Common myeloid progenitor, CD34-positive (primary cell): ENCODE measurements at regions of chr2 and their contacts with region 1.

Region 1: GRCh38 chr2:169584005-169584877 is at the start of gene PPIG:
- DNase-seq: peak; percentile 96 to 98 (median 97)
- H3K4me3 ChIP-seq: peak within 1 kb of the TSS; percentile 81 to 99 (median 95)
- H3K27ac ChIP-seq: peak within 1 kb of the TSS; percentile 95 to 98
- H3K4me1 ChIP-seq: peaks cover 9 to 19% (median 17%) of the 10 kb centered on the region in 4 experiments
- H3K27me3 ChIP-seq: no peaks in the 10 kb centered on the region

Region 2: DNA sequence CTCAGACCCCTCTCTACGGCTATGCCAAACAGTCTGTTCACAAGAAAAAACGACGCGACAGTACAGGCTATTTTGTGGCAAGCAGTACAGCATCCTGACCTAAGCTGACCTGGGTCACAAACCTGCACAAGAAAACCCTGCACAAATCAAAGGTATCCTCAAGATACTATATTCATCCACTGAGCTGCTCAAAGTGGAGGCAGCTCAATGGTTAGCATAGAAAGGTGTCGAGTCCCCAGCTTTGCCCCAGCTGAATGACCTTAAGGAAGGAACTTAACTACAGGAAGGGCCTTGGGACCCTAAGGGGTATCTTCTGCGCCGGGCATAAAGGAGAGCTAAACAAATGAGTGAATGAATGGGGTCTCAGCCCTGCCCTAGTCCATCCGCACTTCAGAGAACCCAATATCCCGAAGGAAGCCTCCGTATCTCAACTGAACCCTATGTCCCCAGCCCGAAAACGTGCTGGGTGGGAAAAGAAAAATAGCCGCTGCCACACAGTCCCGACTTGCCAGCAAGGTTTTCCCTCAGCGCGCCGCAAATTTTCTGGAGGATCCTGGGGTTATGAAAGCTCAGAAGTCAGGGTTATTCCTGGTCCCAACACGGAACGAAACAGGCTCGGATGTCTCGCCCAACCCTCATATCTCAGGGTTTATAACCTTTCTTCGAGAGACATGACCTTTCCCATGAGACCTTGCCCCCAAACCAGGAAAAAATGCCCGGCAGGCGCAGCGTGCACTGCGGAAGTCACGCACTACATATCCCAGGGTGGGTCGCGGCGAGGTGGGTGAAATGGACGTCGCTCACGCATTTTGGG is 10.9 kb before region 1 on chr2 and contains the start of gene FASTKD1:
- CTCF ChIA-PET with region 1: interaction called, 12 read pairs
- POLR2A ChIA-PET with region 1: no interaction called
- DNase-seq: peak; percentile 91 to 93 (median 91)
- H3K4me3 ChIP-seq: peak within 1 kb of the TSS; percentile 68 to 100 (median 94)
- H3K27ac ChIP-seq: peak within 1 kb of the TSS; percentile 70 to 88
- H3K4me1 ChIP-seq: peaks cover 5 to 12% (median 9%) of the 10 kb centered on the region in 4 experiments
- H3K27me3 ChIP-seq: no peaks in the 10 kb centered on the region